ENCODE measurements at regions of chr5 and their contacts with region 1.

Region 1: GRCh38 chr5:132272311-132273210 is 15.1 kb downstream of the PDLIM4 start:
- DNase-seq: peak; percentile 85
- ATAC-seq: peak; percentile 42
- H3K4me3 Mint-ChIP-seq: no peak overlapping the region
- H3K27ac Mint-ChIP-seq: no peak overlapping the region
- H3K4me1 Mint-ChIP-seq: peaks cover 2% of the 10 kb centered on the region
- H3K27me3 Mint-ChIP-seq: peaks cover 18% of the 10 kb centered on the region

Region 2: GRCh38 chr5:132369474-132370180 is 97.1 kb after region 1 on chr5 and contains the start of gene SLC22A5:
- CTCF ChIA-PET with region 1: interaction called, 11 read pairs
- POLR2A ChIA-PET with region 1: no interaction called
- intact Hi-C with region 1: loop called (anchors 1 to 5 kb)
- DNase-seq: peak; percentile 84
- ATAC-seq: peak; percentile 97
- H3K4me3 Mint-ChIP-seq: peak within 1 kb of the TSS; percentile 66
- H3K27ac Mint-ChIP-seq: peak within 1 kb of the TSS; percentile 80
- H3K4me1 Mint-ChIP-seq: peaks cover 24% of the 10 kb centered on the region
- H3K27me3 Mint-ChIP-seq: no peaks in the 10 kb centered on the region
- total RNA-seq, gene SLC22A5: 3.7 to 4.9 TPM

Region 3: GRCh38 chr5:132510076-132510475 is 237.5 kb after region 1 on chr5:
- CTCF ChIA-PET with region 1: no interaction called
- POLR2A ChIA-PET with region 1: no interaction called
- intact Hi-C with region 1: no loop called
- DNase-seq: no peak
- ATAC-seq: no peak
- H3K4me3 Mint-ChIP-seq: no peak overlapping the region
- H3K27ac Mint-ChIP-seq: no peak overlapping the region
- H3K4me1 Mint-ChIP-seq: no peaks in the 10 kb centered on the region
- H3K27me3 Mint-ChIP-seq: peaks cover 26% of the 10 kb centered on the region

Region 4: GRCh38 chr5:132628814-132629213 is 356.3 kb after region 1 on chr5:
- CTCF ChIA-PET with region 1: no interaction called
- POLR2A ChIA-PET with region 1: no interaction called
- intact Hi-C with region 1: no loop called
- DNase-seq: no peak
- ATAC-seq: no peak
- H3K4me3 Mint-ChIP-seq: no peak overlapping the region
- H3K27ac Mint-ChIP-seq: no peak overlapping the region
- H3K4me1 Mint-ChIP-seq: peaks cover 8% of the 10 kb centered on the region
- H3K27me3 Mint-ChIP-seq: no peaks in the 10 kb centered on the region

Measured in activated CD4-positive, alpha-beta T cell treated with anti-CD3 and anti-CD28 coated beads for 36 hours (primary cell).